A673 (cell line): ENCODE measurements at regions of chr18 and their contacts with region 1.

Region 1: GRCh38 chr18:51153659-51154371 is 43.7 kb downstream of the MEX3C start:
- DNase-seq: no peak
- H3K4me3 ChIP-seq: no peak overlapping the region
- H3K27ac ChIP-seq: no peak overlapping the region
- H3K4me1 ChIP-seq: no peaks in the 10 kb centered on the region
- H3K27me3 ChIP-seq: no peaks in the 10 kb centered on the region
- CTCF ChIP-seq: no peak

Region 2: DNA sequence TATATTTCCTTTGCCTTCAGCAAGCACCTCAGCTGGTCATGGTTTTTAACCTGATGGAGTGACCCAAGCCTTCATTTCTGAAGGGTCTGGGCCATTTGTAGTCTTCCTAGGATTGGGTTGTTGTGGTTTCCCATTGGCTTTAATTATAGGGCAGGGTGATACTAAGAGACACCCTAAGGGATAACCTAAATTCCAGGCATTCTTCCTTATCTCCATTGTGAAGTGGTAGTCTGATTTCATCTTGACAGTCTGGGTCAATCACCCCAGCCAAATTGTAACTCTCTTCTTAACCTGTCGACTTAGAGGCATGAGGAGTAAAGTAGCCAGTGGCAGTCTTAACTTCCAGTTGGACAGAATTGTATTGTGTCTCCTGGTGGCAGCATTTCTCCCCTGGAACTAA is 73.8 kb after region 1 on chr18:
- CTCF ChIA-PET with region 1: no interaction called
- POLR2A ChIA-PET with region 1: interaction called, 13 read pairs
- intact Hi-C with region 1: no loop called
- DNase-seq: no peak
- H3K4me3 ChIP-seq: no peak overlapping the region
- H3K27ac ChIP-seq: no peak overlapping the region
- H3K4me1 ChIP-seq: no peaks in the 10 kb centered on the region
- H3K27me3 ChIP-seq: no peaks in the 10 kb centered on the region
- CTCF ChIP-seq: no peak

Region 3: GRCh38 chr18:51316677-51317076 is 162.9 kb after region 1 on chr18:
- CTCF ChIA-PET with region 1: no interaction called
- POLR2A ChIA-PET with region 1: no interaction called
- intact Hi-C with region 1: no loop called
- DNase-seq: no peak
- H3K4me3 ChIP-seq: no peak overlapping the region
- H3K27ac ChIP-seq: no peak overlapping the region
- H3K4me1 ChIP-seq: peaks cover 1% of the 10 kb centered on the region
- H3K27me3 ChIP-seq: no peaks in the 10 kb centered on the region
- CTCF ChIP-seq: no peak